ENCODE measurements at regions of chr7 and their contacts with region 1.

Region 1: DNA sequence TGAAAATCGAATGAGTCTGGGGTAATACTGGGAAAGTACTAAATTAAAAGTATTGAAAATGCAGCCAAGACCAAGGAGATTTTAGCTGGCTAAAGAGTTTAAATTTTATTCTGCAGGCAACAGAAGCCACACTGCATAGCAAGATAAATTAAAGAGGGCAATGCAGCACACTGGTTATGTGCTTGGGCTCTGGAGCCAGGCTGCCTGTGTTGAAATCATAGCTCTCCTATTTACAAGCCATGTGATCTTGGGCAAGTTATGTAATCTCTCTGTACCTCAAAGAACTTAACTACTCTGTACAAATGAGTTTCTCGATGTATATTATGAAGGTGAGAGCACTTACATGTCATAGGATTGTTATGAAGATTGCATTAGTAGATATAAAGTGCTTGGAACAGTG is 9.9 kb downstream of the SLC25A13 start:
- DNase-seq: peak; percentile 59 to 71
- ATAC-seq: peak; percentile 98 to 99
- H3K4me3 ChIP-seq: no peak overlapping the region
- H3K27ac ChIP-seq: peak overlapping the region; percentile 10 to 64 (median 59)
- H3K4me1 ChIP-seq: peaks cover 84 to 88% of the 10 kb centered on the region in 2 donors
- H3K27me3 ChIP-seq: no peaks in the 10 kb centered on the region
- CTCF ChIP-seq: no peak
- POLR2A ChIP-seq: no peak

Region 2: GRCh38 chr7:96236198-96237039 is 75.5 kb before region 1 on chr7:
- in situ Hi-C with region 1: no loop called
- intact Hi-C with region 1: loop called (anchors 5 kb)
- DNase-seq: peak; percentile 23 to 56
- ATAC-seq: peak; percentile 69 to 75
- H3K4me3 ChIP-seq: no peak overlapping the region
- H3K27ac ChIP-seq: peak overlapping the region; percentile 26 to 68 (median 50)
- H3K4me1 ChIP-seq: peaks cover 13 to 30% of the 10 kb centered on the region in 2 donors
- H3K27me3 ChIP-seq: no peaks in the 10 kb centered on the region
- CTCF ChIP-seq: no peak
- POLR2A ChIP-seq: no peak

Measured in gastrocnemius medialis (tissue), 4 donors.